Head of caudate nucleus (tissue), 42 donors: ENCODE measurements at regions of chr6 and their contacts with region 1.

Region 1: DNA sequence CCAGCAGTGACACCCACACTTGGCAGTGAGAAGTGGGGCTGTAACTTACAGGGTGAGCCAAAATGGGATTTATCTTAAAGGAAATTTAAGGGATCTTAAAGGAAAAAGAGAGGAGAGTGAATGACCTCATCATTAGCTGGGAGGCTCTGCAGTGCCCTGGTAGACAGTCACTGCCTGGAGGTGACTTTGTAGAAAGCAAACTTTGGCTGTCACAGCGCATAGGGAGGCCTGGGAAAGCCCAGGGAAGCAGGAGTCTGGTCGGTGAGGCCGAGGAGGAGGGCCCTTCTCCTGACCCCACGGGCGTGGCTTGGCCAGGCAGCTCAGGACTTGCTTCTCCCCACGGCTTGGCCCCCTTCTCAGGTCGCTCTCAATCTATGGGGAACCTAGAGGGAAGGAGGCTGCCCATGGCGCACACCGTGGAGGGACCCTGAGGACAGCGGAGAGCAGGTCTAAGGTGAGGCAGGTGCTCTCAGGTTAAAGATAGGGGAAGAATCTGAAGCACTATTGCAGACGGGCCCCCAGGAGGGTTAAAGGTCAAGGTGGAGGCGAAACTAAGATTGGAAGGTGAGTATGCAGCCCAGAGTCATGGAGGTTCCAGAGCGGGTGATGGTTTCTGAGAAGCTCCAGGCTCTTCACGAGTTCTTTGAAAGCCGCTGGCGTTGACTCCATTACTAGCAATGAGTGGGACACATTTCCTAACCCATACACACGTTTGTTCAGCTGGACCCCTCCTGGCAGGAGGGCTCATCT is 15.6 kb upstream of the RIPK1 start:
- DNase-seq: no peak

Region 2: GRCh38 chr6:2166717-2167116 is 885.9 kb before region 1 on chr6:
- intact Hi-C with region 1: no loop called
- DNase-seq: peak in 10 of 42 donors; percentile 4 to 44 (median 18)

Region 3: DNA sequence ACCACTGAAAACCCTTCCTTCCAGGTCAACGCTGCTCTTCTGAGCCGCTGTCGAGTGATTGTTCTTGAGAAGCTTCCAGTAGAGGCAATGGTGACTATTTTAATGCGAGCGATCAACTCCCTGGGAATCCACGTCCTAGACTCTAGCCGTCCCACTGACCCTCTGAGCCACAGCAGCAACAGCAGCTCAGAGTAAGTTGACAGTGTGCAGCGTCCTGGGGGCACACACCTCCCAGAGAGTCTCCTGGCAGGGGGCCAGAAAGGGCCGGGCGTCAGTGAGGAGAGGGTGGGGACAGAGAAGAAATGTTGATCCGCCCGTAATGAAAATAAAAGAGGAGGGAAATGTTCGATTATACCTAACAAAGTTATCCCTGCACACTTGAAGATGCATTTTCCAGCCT is 282.5 kb before region 1 on chr6:
- intact Hi-C with region 1: loop called (anchors 10 kb)
- DNase-seq: peak in 11 of 42 donors; percentile 27 to 79 (median 49)

Region 4: GRCh38 chr6:2848851-2849250 is 203.8 kb before region 1 on chr6:
- intact Hi-C with region 1: loop called (anchors 5 kb)
- DNase-seq: no peak

Region 5: DNA sequence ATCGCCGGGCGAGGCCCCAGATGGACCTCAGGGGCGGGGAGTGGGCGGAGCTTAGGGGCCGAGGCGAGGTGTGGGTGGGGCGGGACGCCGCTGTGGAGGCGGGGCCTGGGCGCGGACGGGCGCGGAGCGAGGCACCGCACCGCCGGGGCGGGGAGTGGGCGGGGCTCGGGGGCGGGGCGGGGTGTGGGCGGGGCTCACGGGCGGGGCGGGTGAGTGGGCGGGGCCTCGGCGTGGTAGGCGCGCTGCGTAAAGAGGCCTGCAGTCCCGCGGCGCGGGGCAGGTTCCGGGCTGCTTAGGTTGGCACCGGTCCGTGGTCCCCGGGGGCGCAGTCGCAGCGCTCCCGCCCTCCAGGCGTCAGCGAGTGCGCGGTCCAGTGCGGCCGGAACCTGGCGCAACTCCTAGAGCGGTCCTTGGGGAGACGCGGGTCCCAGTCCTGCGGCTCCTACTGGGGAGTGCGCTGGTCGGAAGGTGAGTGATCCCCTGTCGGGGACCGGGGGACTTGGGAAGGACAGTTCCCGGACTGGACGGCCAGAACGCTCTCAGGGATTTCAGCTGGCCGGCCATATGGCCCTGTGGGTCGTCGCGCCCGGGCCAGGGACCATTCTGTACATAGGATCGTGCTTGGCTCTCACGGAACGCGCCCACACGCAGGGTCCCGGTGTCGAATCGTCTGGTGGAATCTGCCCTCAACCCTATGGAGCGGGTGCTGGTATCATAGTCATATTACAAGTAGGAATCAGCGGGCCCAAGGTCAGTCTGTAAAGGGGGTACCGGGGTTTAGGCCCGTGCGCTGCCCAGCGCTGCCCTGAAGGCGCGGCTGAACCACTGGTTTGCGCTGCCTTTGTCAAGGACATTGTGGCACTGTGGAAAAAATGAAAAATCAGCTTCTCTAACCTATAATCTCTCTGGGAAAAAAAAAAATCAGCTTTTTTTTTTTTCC is 52.8 kb before region 1 on chr6 and contains the start of gene NQO2:
- intact Hi-C with region 1: loop called (anchors 2 kb)
- DNase-seq: peak; percentile 74 to 96 (median 92)